ENCODE measurements at regions of chr1 and their contacts with region 1.

Region 1: GRCh38 chr1:231153726-231154125 is 8.1 kb upstream of the TRIM67 start:
- DNase-seq: no peak
- H3K4me3 ChIP-seq: no peak overlapping the region
- H3K27ac ChIP-seq: no peak overlapping the region
- H3K4me1 ChIP-seq: no peaks in the 10 kb centered on the region
- H3K27me3 ChIP-seq: peaks cover 0 to 8% (median 0%) of the 10 kb centered on the region in 3 donors
- CTCF ChIP-seq: no peak
- EP300 ChIP-seq: no peak
- POLR2A ChIP-seq: no peak

Region 2: GRCh38 chr1:230629511-230629910 is 524.2 kb before region 1 on chr1:
- intact Hi-C with region 1: no loop called
- DNase-seq: no peak
- H3K4me3 ChIP-seq: no peak overlapping the region
- H3K27ac ChIP-seq: no peak overlapping the region
- H3K4me1 ChIP-seq: no peaks in the 10 kb centered on the region
- H3K27me3 ChIP-seq: no peaks in the 10 kb centered on the region
- CTCF ChIP-seq: no peak
- EP300 ChIP-seq: no peak
- POLR2A ChIP-seq: no peak

Region 3: DNA sequence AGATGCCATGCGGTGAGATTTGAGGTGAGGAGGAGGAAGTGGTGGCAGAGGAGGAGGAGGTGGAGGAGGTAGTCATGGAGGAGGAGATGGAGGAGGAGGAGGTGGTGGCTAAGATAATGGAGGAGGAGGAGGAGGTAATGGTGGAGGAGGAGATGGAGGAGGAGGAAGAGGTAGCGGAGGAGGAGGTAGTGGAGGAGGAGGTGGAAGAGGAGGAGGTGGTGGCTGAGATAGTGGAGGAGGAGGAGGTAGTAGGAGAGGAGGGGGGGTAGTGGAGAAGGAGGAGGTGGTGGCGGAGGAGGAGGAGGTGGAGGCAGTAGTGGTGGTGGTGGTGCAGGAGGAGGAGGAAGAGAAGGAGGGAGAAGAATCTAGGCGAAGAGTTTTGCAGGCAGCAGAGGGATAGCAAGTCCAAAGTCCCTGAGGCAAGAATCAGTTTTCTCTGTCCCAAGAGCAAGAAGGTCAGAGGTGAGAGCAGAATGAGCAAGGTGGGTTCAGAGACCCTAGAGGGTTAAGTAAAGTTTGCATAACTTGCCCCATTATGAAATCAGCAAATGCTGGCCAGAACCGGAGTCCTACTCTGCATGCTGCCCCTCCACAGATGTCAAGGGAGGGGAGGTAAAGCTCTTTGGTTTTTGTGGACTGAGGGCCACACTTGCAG is 48.4 kb after region 1 on chr1:
- intact Hi-C with region 1: loop called (anchors 2 kb)
- DNase-seq: no peak
- H3K4me3 ChIP-seq: no peak overlapping the region
- H3K27ac ChIP-seq: no peak overlapping the region
- H3K4me1 ChIP-seq: no peaks in the 10 kb centered on the region
- H3K27me3 ChIP-seq: no peaks in the 10 kb centered on the region
- CTCF ChIP-seq: no peak
- EP300 ChIP-seq: no peak
- POLR2A ChIP-seq: no peak

Measured in sigmoid colon (tissue), 7 donors.